Calu3 (cell line): ENCODE measurements at regions of chr2 and their contacts with region 1.

Region 1: DNA sequence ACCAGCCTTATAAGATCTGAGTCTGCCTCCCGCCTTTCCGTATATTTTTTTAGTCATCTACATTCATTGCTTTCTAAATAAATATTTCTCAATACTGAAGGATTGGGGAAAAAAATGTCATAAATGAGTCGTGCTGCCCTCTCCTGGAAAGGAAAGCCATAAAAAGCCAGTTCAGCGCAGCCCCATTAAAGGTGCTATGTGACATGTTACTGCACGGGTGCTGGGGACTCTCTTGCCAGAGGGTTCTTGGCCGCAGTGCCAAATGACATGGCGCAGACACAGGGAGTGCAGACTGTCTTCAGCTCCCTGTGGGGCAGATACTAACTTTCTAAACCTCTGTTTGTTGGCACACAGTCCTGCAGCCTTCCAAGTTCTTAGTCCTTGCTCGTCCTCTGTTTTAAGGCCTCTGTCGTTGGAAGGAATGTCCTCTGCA is 53.7 kb upstream of the MAP3K20 start:
- DNase-seq: peak; percentile 51
- H3K4me3 Mint-ChIP-seq: no peak overlapping the region
- H3K27ac Mint-ChIP-seq: no peak overlapping the region
- H3K4me1 Mint-ChIP-seq: peaks cover under 1% of the 10 kb centered on the region
- H3K27me3 Mint-ChIP-seq: peaks cover 15% of the 10 kb centered on the region
- CTCF ChIP-seq: no peak

Region 2: DNA sequence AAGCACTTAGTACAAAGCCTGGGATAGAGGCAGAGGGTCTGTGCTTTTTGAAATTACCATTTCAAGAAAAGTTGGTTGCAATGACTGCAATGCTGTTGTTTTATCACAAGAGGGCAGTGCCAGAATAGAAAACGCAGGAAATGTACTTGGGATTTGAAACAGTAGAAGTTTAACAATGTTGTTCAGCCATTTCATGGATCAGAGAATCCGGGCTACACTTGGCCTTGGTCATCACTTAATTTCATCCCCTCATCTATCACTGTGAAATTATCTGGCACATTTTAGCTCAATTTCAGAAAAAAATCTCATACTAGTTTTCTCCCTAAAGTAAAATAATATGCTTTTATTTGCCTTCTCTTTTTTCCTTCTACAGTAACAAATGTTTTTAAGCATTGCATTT is 215.5 kb before region 1 on chr2:
- CTCF ChIA-PET with region 1: no interaction called
- intact Hi-C with region 1: loop called (anchors 2 kb)
- DNase-seq: no peak
- H3K4me3 Mint-ChIP-seq: no peak overlapping the region
- H3K27ac Mint-ChIP-seq: no peak overlapping the region
- H3K4me1 Mint-ChIP-seq: no peaks in the 10 kb centered on the region
- H3K27me3 Mint-ChIP-seq: peaks cover 43% of the 10 kb centered on the region
- CTCF ChIP-seq: peak; percentile 75

Region 3: GRCh38 chr2:172972005-172972619 is 49.8 kb before region 1 on chr2:
- CTCF ChIA-PET with region 1: interaction called, 3 read pairs
- intact Hi-C with region 1: loop called (anchors 1 kb)
- DNase-seq: peak; percentile 63
- H3K4me3 Mint-ChIP-seq: no peak overlapping the region
- H3K27ac Mint-ChIP-seq: no peak overlapping the region
- H3K4me1 Mint-ChIP-seq: peaks cover 43% of the 10 kb centered on the region
- H3K27me3 Mint-ChIP-seq: no peaks in the 10 kb centered on the region
- CTCF ChIP-seq: peak; percentile 81

Region 4: GRCh38 chr2:174403628-174404027 is 1381.7 kb after region 1 on chr2:
- CTCF ChIA-PET with region 1: no interaction called
- intact Hi-C with region 1: no loop called
- DNase-seq: no peak
- H3K4me3 Mint-ChIP-seq: no peak overlapping the region
- H3K27ac Mint-ChIP-seq: no peak overlapping the region
- H3K4me1 Mint-ChIP-seq: no peaks in the 10 kb centered on the region
- H3K27me3 Mint-ChIP-seq: no peaks in the 10 kb centered on the region
- CTCF ChIP-seq: no peak